ENCODE measurements at regions of chr15 and their contacts with region 1.

Region 1: DNA sequence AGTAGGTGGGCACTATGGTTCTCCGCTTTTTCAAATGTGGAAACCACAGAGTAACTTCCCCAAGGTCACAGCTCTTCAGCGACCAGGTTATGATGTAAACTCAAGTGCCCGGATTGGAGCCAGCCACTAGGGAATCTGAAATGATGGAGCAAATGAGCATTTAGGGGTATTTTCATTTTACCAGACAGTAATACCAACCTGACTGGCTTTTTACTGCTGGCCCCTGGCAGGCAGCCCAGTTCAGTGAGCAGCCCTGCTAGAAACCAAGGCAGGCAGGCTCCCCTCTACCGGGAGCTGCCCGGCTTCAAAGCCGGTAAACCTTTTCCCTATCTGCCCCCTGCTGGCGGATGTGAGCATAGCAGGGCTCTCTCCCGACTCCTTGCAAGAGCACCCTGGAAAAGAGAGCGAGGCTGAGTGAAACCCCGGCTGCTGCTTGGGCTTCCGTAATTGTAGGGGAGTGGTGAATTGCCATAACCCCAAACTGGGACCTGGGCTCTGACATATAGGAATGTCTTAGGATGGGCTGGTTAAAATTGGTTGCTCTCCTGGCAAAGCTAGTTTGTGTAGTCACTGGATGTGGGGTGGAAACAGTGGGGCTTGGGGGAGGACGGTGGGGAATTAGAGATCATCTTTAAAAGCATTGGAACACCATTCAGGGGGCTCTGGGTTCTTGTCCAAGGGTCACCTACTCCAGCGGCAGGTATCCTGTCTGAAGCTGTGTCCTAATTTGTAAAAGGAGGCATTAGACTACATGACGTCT is 98.0 kb upstream of the TNFAIP8L3 start:
- DNase-seq: peak; percentile 94 to 97
- ATAC-seq: peak; percentile 92
- H3K4me3 ChIP-seq: no peak overlapping the region
- H3K27ac ChIP-seq: peak overlapping the region; percentile 33 to 68
- H3K4me1 ChIP-seq: peaks cover 4 to 7% of the 10 kb centered on the region in 2 donors
- H3K27me3 ChIP-seq: no peaks in the 10 kb centered on the region

Region 2: GRCh38 chr15:51172193-51172592 is 20.5 kb before region 1 on chr15:
- intact Hi-C with region 1: loop called in 1 of 2 experiments (anchors 2 kb)
- DNase-seq: no peak
- ATAC-seq: peak; percentile 78
- H3K4me3 ChIP-seq: no peak overlapping the region
- H3K27ac ChIP-seq: peak overlapping the region; percentile 20 to 99
- H3K4me1 ChIP-seq: peaks cover 7 to 10% of the 10 kb centered on the region in 2 donors
- H3K27me3 ChIP-seq: no peaks in the 10 kb centered on the region

Region 3: GRCh38 chr15:51341366-51342226 is 148.9 kb after region 1 on chr15 and contains the start of gene GLDN:
- intact Hi-C with region 1: no loop called
- DNase-seq: peak; percentile 84 to 91
- ATAC-seq: peak; percentile 90
- H3K4me3 ChIP-seq: peak within 1 kb of the TSS; percentile 43 to 66
- H3K27ac ChIP-seq: peak within 1 kb of the TSS; percentile 68 to 79
- H3K4me1 ChIP-seq: no peaks in the 10 kb centered on the region
- H3K27me3 ChIP-seq: no peaks in the 10 kb centered on the region
- total RNA-seq, gene GLDN: 23.0 to 49.2 TPM